ENCODE measurements at regions of chr4 and their contacts with region 1.

Region 1: DNA sequence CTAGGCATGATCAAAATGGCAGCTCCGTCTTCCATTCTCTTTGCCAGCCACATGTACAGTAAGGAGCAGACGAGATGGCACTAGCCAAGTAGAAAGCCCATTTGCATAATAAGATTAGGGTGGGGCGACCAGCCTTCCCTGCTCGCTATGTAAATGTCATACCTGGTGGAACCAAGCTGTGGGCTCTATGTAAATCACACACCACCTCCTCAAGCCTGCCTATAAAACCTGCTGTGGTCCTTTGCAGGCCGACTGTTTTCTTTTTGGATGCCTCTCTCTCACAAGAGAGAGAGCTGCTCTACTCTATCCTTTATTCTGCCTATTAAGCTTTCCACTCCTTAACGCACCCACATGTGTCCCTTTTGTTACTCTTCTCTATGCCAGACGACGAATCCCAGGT is 1472.7 kb downstream of the ARAP2 start:
- DNase-seq: no peak
- ATAC-seq: no peak
- H3K4me3 ChIP-seq: no peak overlapping the region
- H3K27ac ChIP-seq: no peak overlapping the region
- H3K4me1 ChIP-seq: no peaks in the 10 kb centered on the region
- H3K27me3 ChIP-seq: peaks cover 0 to 7% of the 10 kb centered on the region in 2 donors
- CTCF ChIP-seq: no peak
- POLR2A ChIP-seq: no peak

Region 2: GRCh38 chr4:34826660-34827059 is 55.0 kb after region 1 on chr4:
- intact Hi-C with region 1: loop called in 1 of 2 experiments (anchors 5 kb)
- DNase-seq: no peak
- ATAC-seq: no peak
- H3K4me3 ChIP-seq: no peak overlapping the region
- H3K27ac ChIP-seq: no peak overlapping the region
- H3K4me1 ChIP-seq: no peaks in the 10 kb centered on the region
- H3K27me3 ChIP-seq: no peaks in the 10 kb centered on the region
- CTCF ChIP-seq: no peak
- POLR2A ChIP-seq: no peak

Region 3: DNA sequence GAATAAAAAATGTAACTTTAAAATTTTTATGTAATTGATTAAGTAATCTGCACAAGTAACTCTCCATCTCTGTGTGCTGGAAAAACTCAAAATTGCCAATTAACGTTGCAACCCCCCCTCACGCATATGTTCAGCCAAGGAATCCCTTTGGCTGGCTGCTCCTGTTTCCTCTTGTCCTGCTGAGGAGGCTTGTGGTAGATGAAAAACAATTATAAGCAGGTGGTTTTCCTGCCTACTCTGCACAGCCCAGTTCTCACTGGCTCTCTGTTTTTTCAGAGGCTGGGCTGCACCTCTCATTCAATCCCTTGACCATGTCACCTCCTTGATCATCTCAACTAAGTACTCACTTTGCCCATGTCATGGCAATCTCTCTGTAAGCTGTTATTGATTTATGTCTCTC is 404.3 kb after region 1 on chr4:
- intact Hi-C with region 1: no loop called
- DNase-seq: no peak
- ATAC-seq: no peak
- H3K4me3 ChIP-seq: no peak overlapping the region
- H3K27ac ChIP-seq: no peak overlapping the region
- H3K4me1 ChIP-seq: no peaks in the 10 kb centered on the region
- H3K27me3 ChIP-seq: no peaks in the 10 kb centered on the region
- CTCF ChIP-seq: no peak
- POLR2A ChIP-seq: no peak

Measured in right lobe of liver (tissue), 6 donors.